HAP-1 (cell line): ENCODE measurements at regions of chr12 and their contacts with region 1.

Region 1: DNA sequence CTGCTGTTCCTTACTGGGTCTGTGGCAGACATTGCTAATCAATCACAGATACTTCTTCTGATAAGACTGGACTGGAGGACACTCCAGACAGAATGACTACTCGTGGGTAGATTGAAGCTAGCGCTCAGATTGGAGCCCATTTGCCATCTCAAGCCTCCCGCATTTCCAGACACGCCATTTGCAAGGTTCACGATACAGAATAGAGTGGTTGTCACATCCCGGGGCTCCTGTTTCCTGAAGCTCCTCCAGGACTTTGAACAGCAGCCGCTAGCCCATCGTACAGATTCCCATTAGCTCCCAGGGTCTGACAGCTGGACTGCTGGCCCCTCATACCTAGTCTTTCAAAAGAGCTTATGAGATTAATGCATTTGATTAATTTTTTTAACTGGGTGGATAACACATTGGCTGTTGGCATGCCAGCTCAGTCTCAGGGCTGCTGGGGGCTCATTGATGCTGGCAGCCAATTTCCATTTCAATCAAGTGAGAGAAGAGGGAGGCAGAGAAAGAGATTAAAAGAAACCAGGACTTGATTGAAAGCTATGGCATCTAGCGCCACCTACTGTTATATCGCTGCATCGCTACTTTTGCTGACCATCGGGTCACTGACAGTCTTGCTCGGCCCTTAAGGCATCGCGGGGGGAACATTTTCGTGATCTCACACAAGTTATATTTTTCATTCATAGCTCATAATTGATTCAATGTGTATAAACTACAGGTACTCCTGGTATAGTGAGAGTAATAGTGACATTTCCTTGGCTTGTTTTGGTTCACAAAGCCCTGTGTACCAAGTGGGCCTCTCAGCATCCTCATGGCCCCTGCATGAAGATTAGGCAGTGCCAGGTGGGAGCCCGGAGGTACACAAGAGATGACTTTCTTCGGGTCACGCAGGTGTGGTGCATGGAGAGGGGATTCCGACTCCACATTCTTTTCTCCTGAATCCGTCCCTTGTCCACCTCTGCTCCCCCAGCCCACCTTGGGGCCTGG is 78.6 kb downstream of the CCDC60 start:
- DNase-seq: peak; percentile 54 to 80
- H3K4me3 ChIP-seq: no peak overlapping the region
- H3K4me1 ChIP-seq: no peaks in the 10 kb centered on the region
- H3K27me3 ChIP-seq: no peaks in the 10 kb centered on the region

Region 2: DNA sequence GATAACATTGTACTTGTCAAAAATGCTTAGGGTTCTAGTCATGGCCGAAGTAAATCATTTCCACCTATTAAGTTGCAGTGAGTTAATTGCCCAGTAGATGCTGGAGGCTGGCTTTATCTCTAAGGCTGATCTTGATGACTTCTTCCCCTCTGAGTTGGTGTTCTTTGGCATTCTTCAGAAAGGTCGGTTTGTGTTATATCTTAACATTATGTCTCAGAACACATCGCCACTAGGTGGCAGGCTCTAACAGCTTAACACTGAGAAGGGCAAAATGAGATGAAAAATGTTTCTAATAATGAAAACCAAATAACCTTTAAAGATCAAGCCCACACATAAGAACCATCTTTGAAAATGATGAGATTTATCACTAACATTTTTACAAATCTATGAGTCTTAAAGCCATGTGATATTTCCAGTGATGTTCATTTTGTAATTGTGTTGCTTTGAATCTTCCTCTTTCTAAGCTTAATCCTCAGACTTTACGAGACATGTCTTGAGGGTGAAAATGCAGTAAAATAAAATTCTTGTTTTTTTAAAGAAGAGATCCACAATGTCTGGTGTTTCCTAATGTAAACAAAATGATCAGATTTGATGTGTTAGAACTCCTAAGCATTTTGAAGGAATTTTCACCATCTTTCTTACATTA is 1008.1 kb before region 1 on chr12:
- in situ Hi-C with region 1: loop called (anchors 25 kb)
- DNase-seq: peak; percentile 44 to 78
- H3K4me3 ChIP-seq: no peak overlapping the region
- H3K4me1 ChIP-seq: no peaks in the 10 kb centered on the region
- H3K27me3 ChIP-seq: no peaks in the 10 kb centered on the region

Region 3: DNA sequence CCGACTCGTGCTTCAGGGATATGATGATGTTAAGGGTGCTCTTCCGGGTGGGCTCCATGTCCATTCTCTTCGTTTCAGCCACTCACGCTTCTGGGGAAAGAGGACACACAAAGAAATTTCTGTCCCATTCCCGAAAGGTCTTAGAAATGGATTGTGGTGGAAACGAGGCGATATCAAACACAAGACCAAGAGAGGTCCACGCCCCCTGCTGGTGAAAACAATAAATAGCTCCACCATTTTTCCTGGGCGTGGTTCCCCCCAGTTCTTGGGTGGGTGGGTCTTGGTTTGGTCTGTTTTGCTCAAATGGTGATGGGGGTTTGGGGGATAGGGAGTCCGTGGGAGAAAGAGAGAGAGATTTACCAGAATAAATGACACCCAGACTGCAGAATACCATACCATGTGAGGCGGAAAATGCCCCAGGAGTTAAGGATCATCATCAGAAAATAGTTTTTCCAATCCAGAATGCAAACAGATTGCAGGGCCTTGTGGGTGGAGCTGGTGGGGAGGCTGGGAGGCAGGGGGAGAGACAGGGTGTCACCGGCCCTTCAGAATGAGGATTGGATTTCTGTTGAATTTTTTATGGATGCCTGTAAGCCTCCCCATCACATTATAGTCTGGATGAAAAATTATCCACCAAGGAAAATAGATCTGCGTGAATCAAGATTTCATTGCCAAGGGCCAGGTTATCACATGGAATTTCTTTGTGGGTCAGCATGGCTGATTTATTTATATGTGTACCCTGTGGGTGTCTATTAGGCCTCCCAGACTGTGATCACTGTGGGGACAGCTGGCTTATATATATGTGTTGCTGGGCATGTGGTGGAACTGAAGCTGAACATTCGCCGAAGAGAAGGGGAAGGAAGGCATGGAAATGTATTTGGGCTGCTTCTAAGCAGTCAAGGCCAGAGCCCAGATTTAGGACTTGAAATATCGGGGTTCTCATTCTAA is 376.0 kb before region 1 on chr12:
- in situ Hi-C with region 1: no loop called
- DNase-seq: peak; percentile 23 to 63
- H3K4me3 ChIP-seq: no peak overlapping the region
- H3K4me1 ChIP-seq: no peaks in the 10 kb centered on the region
- H3K27me3 ChIP-seq: no peaks in the 10 kb centered on the region